Naive thymus-derived CD4-positive, alpha-beta T cell (primary cell): ENCODE measurements at regions of chr5 and their contacts with region 1.

Region 1: GRCh38 chr5:181243512-181244343 is at the start of gene RACK1:
- DNase-seq: peak; percentile 77 to 93 (median 91)
- ATAC-seq: peak; percentile 83
- H3K4me3 ChIP-seq: peak within 1 kb of the TSS; percentile 99
- H3K4me3 Mint-ChIP-seq: peak within 1 kb of the TSS; percentile 91 to 99 (median 98)
- H3K27ac ChIP-seq: peak within 1 kb of the TSS; percentile 91
- H3K27ac Mint-ChIP-seq: peak within 1 kb of the TSS; percentile 93 to 100 (median 97)
- H3K4me1 ChIP-seq: peaks cover 39 to 46% of the 10 kb centered on the region in 2 donors
- H3K4me1 Mint-ChIP-seq: peaks cover 45 to 78% (median 66%) of the 10 kb centered on the region in 7 donors
- H3K27me3 ChIP-seq: no peaks in the 10 kb centered on the region
- H3K27me3 Mint-ChIP-seq: no peaks in the 10 kb centered on the region
- total RNA-seq, gene RACK1: 1,703 to 2,739 (median 2,322) TPM

Region 2: DNA sequence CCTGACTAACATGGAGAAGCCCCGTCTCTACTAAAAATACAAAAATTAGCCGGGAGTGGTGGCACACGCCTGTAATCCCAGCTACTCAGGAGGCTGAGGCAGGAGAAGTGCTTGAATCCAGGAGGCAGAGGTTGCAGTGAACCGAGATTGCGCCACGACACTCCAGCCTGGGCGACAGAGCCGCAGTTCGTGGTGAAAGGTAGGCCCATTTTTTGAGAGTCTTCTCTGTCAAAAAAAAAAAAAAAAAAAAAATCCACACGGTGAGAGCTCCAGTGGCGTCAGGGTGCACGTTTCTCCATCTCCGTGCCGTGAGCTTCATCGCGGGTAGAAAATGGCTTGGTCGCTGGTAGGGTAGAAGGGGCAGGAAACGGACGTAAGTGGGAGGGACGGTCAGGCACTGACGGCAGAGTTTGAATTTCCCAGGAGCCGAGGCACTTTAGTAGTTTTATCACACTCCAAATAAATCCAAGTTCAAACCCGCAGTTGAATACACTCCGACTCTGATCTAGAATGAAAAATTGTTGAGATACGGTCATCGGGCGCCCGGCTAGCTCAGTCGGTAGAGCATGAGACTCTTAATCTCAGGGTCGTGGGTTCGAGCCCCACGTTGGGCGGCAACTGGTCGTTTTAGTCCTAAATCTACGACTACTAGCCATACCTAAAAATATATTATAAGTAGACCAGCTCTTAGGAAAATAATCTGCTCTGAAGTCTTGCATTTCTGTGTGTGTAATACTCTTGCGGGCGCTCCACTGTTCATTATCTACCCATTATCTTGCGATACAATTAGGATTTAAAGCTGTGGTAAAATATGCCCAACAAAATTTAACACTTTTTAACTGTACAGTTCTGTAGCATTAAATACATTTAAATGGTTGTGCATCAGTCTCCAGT is 36.3 kb before region 1 on chr5:
- CTCF ChIA-PET with region 1: interaction called, 3 read pairs
- POLR2A ChIA-PET with region 1: interaction called, 13 read pairs
- intact Hi-C with region 1: loop called in 1 of 2 experiments (anchors 1 kb)
- DNase-seq: peak; percentile 38 to 87 (median 78)
- ATAC-seq: peak; percentile 70
- H3K4me3 ChIP-seq: peak overlapping the region; percentile 67
- H3K4me3 Mint-ChIP-seq: peak overlapping the region; percentile 88 to 99 (median 94)
- H3K27ac ChIP-seq: peak overlapping the region; percentile 73
- H3K27ac Mint-ChIP-seq: peak overlapping the region; percentile 90 to 100 (median 98)
- H3K4me1 ChIP-seq: peaks cover 5 to 11% of the 10 kb centered on the region in 2 donors
- H3K4me1 Mint-ChIP-seq: peaks cover 21 to 45% (median 37%) of the 10 kb centered on the region in 7 donors
- H3K27me3 ChIP-seq: peaks cover 0 to 4% of the 10 kb centered on the region in 2 donors
- H3K27me3 Mint-ChIP-seq: peaks cover 0 to 36% (median 11%) of the 10 kb centered on the region in 5 donors